Heart left ventricle (tissue), 16 donors: ENCODE measurements at regions of chr1 and their contacts with region 1.

Region 1: DNA sequence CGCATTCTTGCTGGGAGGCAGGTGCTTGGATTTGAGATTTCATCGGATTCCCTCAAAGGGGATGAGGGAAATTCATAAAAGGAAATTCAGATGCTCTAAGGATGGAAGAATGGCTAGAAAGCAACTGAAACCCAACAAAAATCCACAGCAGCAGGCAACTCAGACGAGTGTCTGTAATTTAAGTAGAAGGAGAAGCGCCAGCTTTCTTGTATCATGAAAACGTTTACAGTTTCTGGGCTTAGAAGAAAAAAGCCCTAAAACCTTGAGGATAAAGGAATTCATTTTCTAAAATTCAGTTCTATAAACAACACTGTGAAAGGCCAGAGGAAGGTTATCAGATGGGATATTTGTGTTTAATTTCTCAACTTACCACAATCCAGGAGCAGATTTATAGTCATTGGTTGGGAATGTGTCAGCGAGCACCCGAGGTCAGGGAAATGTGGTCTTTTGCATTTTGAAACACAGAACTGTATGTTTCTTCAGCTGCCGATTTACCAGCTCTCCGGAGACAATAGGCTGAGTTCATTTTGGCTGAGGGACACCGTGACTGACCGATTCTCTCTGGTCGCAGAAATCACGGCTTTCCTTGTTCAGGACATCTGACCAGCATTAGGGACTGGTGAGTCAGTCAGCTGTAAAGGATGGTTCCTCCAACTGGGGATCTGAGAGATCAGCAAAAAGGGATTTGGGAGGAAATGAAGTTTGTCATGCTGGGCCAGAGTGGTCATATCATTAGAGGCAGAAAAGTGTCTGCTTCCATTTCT is 111.6 kb upstream of the ERRFI1 start:
- DNase-seq: peak in 4 of 5 donors; percentile 40 to 50 (median 46)
- ATAC-seq: peak; percentile 15 to 77 (median 68)
- H3K4me3 ChIP-seq: peak overlapping the region in 2 of 12 donors; percentile 1 to 21
- H3K27ac ChIP-seq: peak overlapping the region in 11 of 12 donors; percentile 37 to 79 (median 51)
- H3K4me1 ChIP-seq: peaks cover 0 to 32% (median 9%) of the 10 kb centered on the region in 12 donors
- H3K27me3 ChIP-seq: no peaks in the 10 kb centered on the region
- CTCF ChIP-seq: no peak
- POLR2A ChIP-seq: no peak

Region 2: GRCh38 chr1:8040586-8040985 is 97.1 kb before region 1 on chr1:
- intact Hi-C with region 1: loop called in 1 of 10 experiments (anchors 10 kb)
- DNase-seq: peak; percentile 65 to 84 (median 76)
- ATAC-seq: peak in 3 of 4 donors; percentile 74 to 92 (median 76)
- H3K4me3 ChIP-seq: no peak overlapping the region
- H3K27ac ChIP-seq: peak overlapping the region in 9 of 12 donors; percentile 5 to 67 (median 49)
- H3K4me1 ChIP-seq: peaks cover 0 to 5% (median 0%) of the 10 kb centered on the region in 12 donors
- H3K27me3 ChIP-seq: no peaks in the 10 kb centered on the region
- CTCF ChIP-seq: no peak
- POLR2A ChIP-seq: no peak

Region 3: GRCh38 chr1:8104278-8105236 is 33.1 kb before region 1 on chr1:
- intact Hi-C with region 1: no loop called
- DNase-seq: no peak
- ATAC-seq: peak in 1 of 4 donors; percentile 31
- H3K4me3 ChIP-seq: no peak overlapping the region
- H3K27ac ChIP-seq: peak overlapping the region in 1 of 12 donors; percentile 74
- H3K4me1 ChIP-seq: peaks cover 0 to 10% (median 0%) of the 10 kb centered on the region in 12 donors
- H3K27me3 ChIP-seq: no peaks in the 10 kb centered on the region
- CTCF ChIP-seq: no peak
- POLR2A ChIP-seq: no peak

Region 4: DNA sequence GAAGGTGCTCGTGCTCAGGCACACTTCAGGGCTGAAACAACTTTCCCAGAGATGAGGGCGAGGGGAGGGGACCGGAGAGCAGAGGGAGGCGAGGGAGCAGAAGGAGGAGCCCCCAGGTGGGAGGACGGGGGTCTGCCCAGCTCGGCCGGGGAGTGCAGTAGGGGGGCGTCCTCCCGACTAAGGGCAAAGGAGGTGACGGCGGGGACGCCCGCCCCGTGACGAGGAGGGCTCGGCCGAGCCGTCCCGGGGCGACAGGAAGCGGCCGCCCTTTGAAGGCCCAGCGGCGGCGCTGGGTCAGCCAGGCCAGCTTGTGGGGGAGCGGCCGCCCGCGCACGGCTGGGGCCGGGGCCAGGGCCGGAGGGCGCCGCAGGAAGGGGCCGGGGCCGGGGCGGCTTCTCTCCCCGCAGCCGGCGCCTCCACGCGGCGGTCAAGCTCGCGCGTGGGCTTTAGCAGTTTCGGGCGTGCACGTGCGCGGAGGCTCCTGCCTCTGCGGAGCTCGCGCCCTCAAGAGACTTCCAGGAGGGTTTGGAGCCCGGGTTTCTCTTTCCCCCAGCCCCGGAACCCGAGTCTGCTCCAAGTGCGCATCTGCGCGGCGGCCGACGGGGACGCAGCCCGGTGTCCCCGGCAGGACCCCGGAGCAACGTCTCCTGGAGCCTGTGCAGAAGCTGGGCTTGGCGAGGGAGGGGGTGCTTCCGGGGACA is 79.5 kb after region 1 on chr1:
- intact Hi-C with region 1: loop called in 1 of 10 experiments (anchors 5 kb)
- DNase-seq: peak; percentile 47 to 78 (median 53)
- ATAC-seq: peak; percentile 33 to 87 (median 84)
- H3K4me3 ChIP-seq: peak overlapping the region; percentile 19 to 70 (median 56)
- H3K27ac ChIP-seq: peak overlapping the region; percentile 29 to 83 (median 62)
- H3K4me1 ChIP-seq: peaks cover 0 to 64% (median 15%) of the 10 kb centered on the region in 12 donors
- H3K27me3 ChIP-seq: peaks cover 0 to 6% (median 0%) of the 10 kb centered on the region in 9 donors
- CTCF ChIP-seq: peak in 4 of 12 donors; percentile 11 to 34 (median 28)
- POLR2A ChIP-seq: no peak